CD8-positive, alpha-beta T cell (primary cell): ENCODE measurements at regions of chr4 and their contacts with region 1.

Region 1: DNA sequence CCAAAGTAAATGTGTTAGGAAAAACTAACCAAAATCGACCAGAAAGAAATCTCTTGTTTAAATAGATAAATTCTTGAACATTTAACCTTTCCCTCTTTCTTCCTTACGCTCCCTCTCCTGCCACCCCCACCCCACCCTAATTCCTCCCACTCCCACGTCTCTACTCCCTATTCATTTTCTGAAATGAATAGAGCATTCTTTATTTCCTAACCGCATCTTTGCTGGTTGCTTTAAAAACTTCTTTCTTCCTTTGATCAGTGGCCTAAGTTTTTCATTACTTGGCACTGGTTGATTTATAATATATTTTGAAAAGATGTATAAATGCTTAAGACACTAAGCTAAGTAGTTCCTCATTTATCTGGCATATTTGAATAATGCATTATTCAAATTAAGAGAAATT is 33.9 kb downstream of the BMPR1B start:
- DNase-seq: no peak
- ATAC-seq: no peak
- H3K4me3 ChIP-seq: no peak overlapping the region
- H3K4me3 Mint-ChIP-seq: no peak overlapping the region
- H3K27ac ChIP-seq: no peak overlapping the region
- H3K27ac Mint-ChIP-seq: no peak overlapping the region
- H3K4me1 ChIP-seq: no peaks in the 10 kb centered on the region
- H3K4me1 Mint-ChIP-seq: no peaks in the 10 kb centered on the region
- H3K27me3 ChIP-seq: no peaks in the 10 kb centered on the region
- H3K27me3 Mint-ChIP-seq: no peaks in the 10 kb centered on the region
- CTCF ChIP-seq: no peak

Region 2: GRCh38 chr4:92988301-92988700 is 1803.4 kb before region 1 on chr4:
- CTCF ChIA-PET with region 1: no interaction called
- POLR2A ChIA-PET with region 1: no interaction called
- intact Hi-C with region 1: no loop called
- DNase-seq: no peak
- ATAC-seq: no peak
- H3K4me3 ChIP-seq: no peak overlapping the region
- H3K4me3 Mint-ChIP-seq: no peak overlapping the region
- H3K27ac ChIP-seq: no peak overlapping the region
- H3K27ac Mint-ChIP-seq: no peak overlapping the region
- H3K4me1 ChIP-seq: no peaks in the 10 kb centered on the region
- H3K4me1 Mint-ChIP-seq: no peaks in the 10 kb centered on the region
- H3K27me3 ChIP-seq: no peaks in the 10 kb centered on the region
- H3K27me3 Mint-ChIP-seq: no peaks in the 10 kb centered on the region
- CTCF ChIP-seq: no peak

Region 3: GRCh38 chr4:94714365-94715160 is 77.1 kb before region 1 on chr4:
- CTCF ChIA-PET with region 1: no interaction called
- POLR2A ChIA-PET with region 1: no interaction called
- intact Hi-C with region 1: no loop called
- DNase-seq: no peak
- ATAC-seq: no peak
- H3K4me3 ChIP-seq: no peak overlapping the region
- H3K4me3 Mint-ChIP-seq: no peak overlapping the region
- H3K27ac ChIP-seq: no peak overlapping the region
- H3K27ac Mint-ChIP-seq: no peak overlapping the region
- H3K4me1 ChIP-seq: no peaks in the 10 kb centered on the region
- H3K4me1 Mint-ChIP-seq: no peaks in the 10 kb centered on the region
- H3K27me3 ChIP-seq: no peaks in the 10 kb centered on the region
- H3K27me3 Mint-ChIP-seq: no peaks in the 10 kb centered on the region
- CTCF ChIP-seq: no peak

Region 4: DNA sequence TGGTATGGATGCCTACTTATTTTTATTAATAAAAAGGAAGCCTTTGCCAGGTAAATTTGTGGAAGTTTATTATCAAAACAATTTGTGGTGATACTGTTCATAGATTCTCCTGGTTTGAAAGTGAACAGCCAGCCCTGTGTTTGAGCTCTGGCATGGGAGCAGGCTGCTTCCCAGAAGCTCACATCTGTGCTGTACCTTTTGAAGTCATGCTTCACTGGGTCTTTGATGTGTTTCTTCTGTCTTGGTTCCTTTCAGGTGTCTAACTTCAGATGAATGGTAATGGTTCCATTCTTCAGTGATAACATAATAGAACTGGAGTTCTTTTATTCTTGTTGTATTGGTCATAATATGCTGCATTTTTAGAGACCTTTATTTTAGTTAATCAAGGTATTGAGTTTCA is 51.5 kb after region 1 on chr4:
- CTCF ChIA-PET with region 1: no interaction called
- POLR2A ChIA-PET with region 1: no interaction called
- intact Hi-C with region 1: loop called in 1 of 2 experiments (anchors 2 kb)
- DNase-seq: no peak
- ATAC-seq: no peak
- H3K4me3 ChIP-seq: no peak overlapping the region
- H3K4me3 Mint-ChIP-seq: no peak overlapping the region
- H3K27ac ChIP-seq: no peak overlapping the region
- H3K27ac Mint-ChIP-seq: no peak overlapping the region
- H3K4me1 ChIP-seq: no peaks in the 10 kb centered on the region
- H3K4me1 Mint-ChIP-seq: no peaks in the 10 kb centered on the region
- H3K27me3 ChIP-seq: no peaks in the 10 kb centered on the region
- H3K27me3 Mint-ChIP-seq: peaks cover 3% of the 10 kb centered on the region
- CTCF ChIP-seq: no peak

Region 5: GRCh38 chr4:95255396-95256107 is 463.9 kb after region 1 on chr4:
- CTCF ChIA-PET with region 1: no interaction called
- POLR2A ChIA-PET with region 1: no interaction called
- intact Hi-C with region 1: no loop called
- DNase-seq: no peak
- ATAC-seq: no peak
- H3K4me3 ChIP-seq: no peak overlapping the region
- H3K4me3 Mint-ChIP-seq: no peak overlapping the region
- H3K27ac ChIP-seq: no peak overlapping the region
- H3K27ac Mint-ChIP-seq: no peak overlapping the region
- H3K4me1 ChIP-seq: no peaks in the 10 kb centered on the region
- H3K4me1 Mint-ChIP-seq: no peaks in the 10 kb centered on the region
- H3K27me3 ChIP-seq: no peaks in the 10 kb centered on the region
- H3K27me3 Mint-ChIP-seq: no peaks in the 10 kb centered on the region
- CTCF ChIP-seq: no peak

Region 6: DNA sequence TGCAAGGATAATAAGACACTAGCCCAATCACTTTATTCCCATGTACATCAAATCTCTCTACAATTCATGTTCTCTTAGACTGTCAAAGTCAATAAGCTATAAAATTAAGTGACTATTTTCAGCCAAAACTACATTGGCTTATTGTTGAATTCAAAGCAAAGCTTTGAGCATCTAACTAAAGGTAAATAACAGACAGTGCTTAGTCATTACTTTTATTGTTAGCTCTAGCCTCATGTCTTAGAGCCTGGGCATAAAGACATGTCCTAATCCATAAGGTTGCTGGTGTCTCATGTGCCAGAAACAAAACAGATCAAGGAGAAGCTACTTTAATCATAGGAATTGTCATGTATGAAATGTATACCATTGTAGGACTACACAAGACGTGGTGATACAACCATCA is 860.2 kb after region 1 on chr4:
- CTCF ChIA-PET with region 1: no interaction called
- POLR2A ChIA-PET with region 1: no interaction called
- intact Hi-C with region 1: no loop called
- DNase-seq: no peak
- ATAC-seq: no peak
- H3K4me3 ChIP-seq: no peak overlapping the region
- H3K4me3 Mint-ChIP-seq: no peak overlapping the region
- H3K27ac ChIP-seq: no peak overlapping the region
- H3K27ac Mint-ChIP-seq: no peak overlapping the region
- H3K4me1 ChIP-seq: no peaks in the 10 kb centered on the region
- H3K4me1 Mint-ChIP-seq: no peaks in the 10 kb centered on the region
- H3K27me3 ChIP-seq: no peaks in the 10 kb centered on the region
- H3K27me3 Mint-ChIP-seq: no peaks in the 10 kb centered on the region
- CTCF ChIP-seq: no peak